Caco-2 (cell line): ENCODE measurements at regions of chr1 and their contacts with region 1.

Region 1: GRCh38 chr1:17606826-17607440 is 67.4 kb downstream of the ARHGEF10L start:
- DNase-seq: peak; percentile 66 to 76
- H3K4me3 ChIP-seq: no peak overlapping the region
- H3K4me3 Mint-ChIP-seq: no peak overlapping the region
- H3K27ac Mint-ChIP-seq: no peak overlapping the region
- H3K4me1 ChIP-seq: no peaks in the 10 kb centered on the region
- H3K4me1 Mint-ChIP-seq: no peaks in the 10 kb centered on the region
- H3K27me3 ChIP-seq: no peaks in the 10 kb centered on the region
- H3K27me3 Mint-ChIP-seq: no peaks in the 10 kb centered on the region
- CTCF ChIP-seq: peak; percentile 83 to 86

Region 2: DNA sequence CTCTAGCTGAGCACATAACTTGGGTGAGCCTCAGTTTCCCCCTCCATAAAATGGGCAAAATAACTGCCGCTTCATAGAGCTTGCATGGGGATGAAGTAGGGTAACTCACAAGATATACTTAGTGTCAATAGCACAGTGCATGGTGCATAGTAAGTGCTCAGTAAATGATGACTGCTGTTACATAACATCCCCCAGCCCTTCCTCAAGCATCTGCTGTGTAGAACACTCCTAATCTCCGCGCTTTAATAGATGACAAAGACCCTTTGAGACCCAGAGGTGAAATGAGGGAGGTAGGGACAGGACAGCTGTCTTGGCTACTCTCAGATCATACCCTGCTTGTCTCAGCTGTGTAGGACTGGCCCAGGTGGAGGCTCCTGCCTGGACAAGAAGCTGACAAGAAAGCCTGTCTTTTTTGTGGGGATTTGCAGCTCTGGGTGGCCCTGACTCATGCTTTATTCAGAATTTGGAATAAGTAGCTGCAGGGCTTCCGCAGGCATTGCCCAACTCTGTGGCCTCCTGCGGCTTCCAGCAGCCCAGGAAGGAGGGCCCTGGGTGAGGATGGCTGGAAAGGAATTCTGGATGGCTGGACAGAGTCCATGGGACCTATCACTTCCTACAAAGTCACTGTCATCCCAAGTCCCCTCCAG is 319.7 kb before region 1 on chr1:
- CTCF ChIA-PET with region 1: no interaction called
- POLR2A ChIA-PET with region 1: no interaction called
- intact Hi-C with region 1: no loop called
- DNase-seq: no peak
- H3K4me3 ChIP-seq: no peak overlapping the region
- H3K4me3 Mint-ChIP-seq: no peak overlapping the region
- H3K27ac Mint-ChIP-seq: no peak overlapping the region
- H3K4me1 ChIP-seq: no peaks in the 10 kb centered on the region
- H3K4me1 Mint-ChIP-seq: no peaks in the 10 kb centered on the region
- H3K27me3 ChIP-seq: no peaks in the 10 kb centered on the region; the same call in 1 of the 2 replicates
- H3K27me3 Mint-ChIP-seq: no peaks in the 10 kb centered on the region
- CTCF ChIP-seq: no peak

Region 3: GRCh38 chr1:17494114-17494729 is 112.7 kb before region 1 on chr1:
- CTCF ChIA-PET with region 1: interaction called, 9 read pairs
- POLR2A ChIA-PET with region 1: no interaction called
- intact Hi-C with region 1: loop called (anchors 1 kb)
- DNase-seq: peak; percentile 74 to 81
- H3K4me3 ChIP-seq: no peak overlapping the region
- H3K4me3 Mint-ChIP-seq: no peak overlapping the region
- H3K27ac Mint-ChIP-seq: no peak overlapping the region
- H3K4me1 ChIP-seq: 0 out of 2 replicates have a peak, but pooled peaks cover 7% of the 10 kb centered on the region
- H3K4me1 Mint-ChIP-seq: peaks cover 7% of the 10 kb centered on the region
- H3K27me3 ChIP-seq: no peaks in the 10 kb centered on the region
- H3K27me3 Mint-ChIP-seq: no peaks in the 10 kb centered on the region
- CTCF ChIP-seq: peak; percentile 74 to 84

Region 4: DNA sequence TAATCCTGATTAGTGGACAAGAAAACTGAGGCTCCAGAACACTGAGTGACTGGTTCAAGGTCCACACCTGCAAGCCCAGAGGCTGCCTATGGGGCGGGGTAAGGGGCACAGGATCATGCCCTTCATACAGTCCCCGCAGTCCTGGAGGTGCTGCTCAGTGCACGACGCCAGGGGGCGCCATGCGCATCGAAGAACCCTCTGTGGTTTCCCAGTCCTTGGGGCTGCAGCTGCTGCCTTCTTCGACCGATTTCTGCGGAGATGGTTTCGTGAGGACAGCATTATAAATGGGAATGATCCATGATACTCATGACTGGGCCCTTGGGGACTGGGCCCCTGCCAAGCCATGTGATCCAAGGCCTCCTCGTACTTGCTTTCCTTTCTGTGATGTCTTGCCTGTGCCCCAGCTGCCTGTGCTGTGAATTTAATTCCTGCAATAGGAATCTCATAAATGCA is 104.6 kb before region 1 on chr1:
- CTCF ChIA-PET with region 1: interaction called, 18 read pairs
- POLR2A ChIA-PET with region 1: no interaction called
- intact Hi-C with region 1: loop called (anchors 1 kb)
- DNase-seq: peak; percentile 68 to 80
- H3K4me3 ChIP-seq: no peak overlapping the region
- H3K4me3 Mint-ChIP-seq: no peak overlapping the region
- H3K27ac Mint-ChIP-seq: no peak overlapping the region
- H3K4me1 ChIP-seq: 0 out of 2 replicates have a peak, but pooled peaks cover 7% of the 10 kb centered on the region
- H3K4me1 Mint-ChIP-seq: peaks cover 7% of the 10 kb centered on the region
- H3K27me3 ChIP-seq: no peaks in the 10 kb centered on the region
- H3K27me3 Mint-ChIP-seq: no peaks in the 10 kb centered on the region
- CTCF ChIP-seq: peak; percentile 72 to 74

Region 5: GRCh38 chr1:17574516-17574915 is 32.4 kb before region 1 on chr1:
- CTCF ChIA-PET with region 1: interaction called, 76 read pairs
- POLR2A ChIA-PET with region 1: no interaction called
- intact Hi-C with region 1: loop called (anchors 1 kb)
- DNase-seq: peak; percentile 49 to 59
- H3K4me3 ChIP-seq: no peak overlapping the region
- H3K4me3 Mint-ChIP-seq: no peak overlapping the region
- H3K27ac Mint-ChIP-seq: peak overlapping the region; percentile 65
- H3K4me1 ChIP-seq: peaks cover 34% of the 10 kb centered on the region
- H3K4me1 Mint-ChIP-seq: peaks cover 21% of the 10 kb centered on the region
- H3K27me3 ChIP-seq: no peaks in the 10 kb centered on the region
- H3K27me3 Mint-ChIP-seq: no peaks in the 10 kb centered on the region
- CTCF ChIP-seq: peak; percentile 37 to 51

Region 6: GRCh38 chr1:17581389-17582123 is 25.4 kb before region 1 on chr1:
- CTCF ChIA-PET with region 1: interaction called, 76 read pairs
- POLR2A ChIA-PET with region 1: no interaction called
- intact Hi-C with region 1: no loop called
- DNase-seq: no peak
- H3K4me3 ChIP-seq: no peak overlapping the region
- H3K4me3 Mint-ChIP-seq: peak overlapping the region; percentile 36
- H3K27ac Mint-ChIP-seq: no peak overlapping the region
- H3K4me1 ChIP-seq: peaks cover 50% of the 10 kb centered on the region
- H3K4me1 Mint-ChIP-seq: peaks cover 25% of the 10 kb centered on the region
- H3K27me3 ChIP-seq: no peaks in the 10 kb centered on the region
- H3K27me3 Mint-ChIP-seq: no peaks in the 10 kb centered on the region
- CTCF ChIP-seq: no peak

Region 7: DNA sequence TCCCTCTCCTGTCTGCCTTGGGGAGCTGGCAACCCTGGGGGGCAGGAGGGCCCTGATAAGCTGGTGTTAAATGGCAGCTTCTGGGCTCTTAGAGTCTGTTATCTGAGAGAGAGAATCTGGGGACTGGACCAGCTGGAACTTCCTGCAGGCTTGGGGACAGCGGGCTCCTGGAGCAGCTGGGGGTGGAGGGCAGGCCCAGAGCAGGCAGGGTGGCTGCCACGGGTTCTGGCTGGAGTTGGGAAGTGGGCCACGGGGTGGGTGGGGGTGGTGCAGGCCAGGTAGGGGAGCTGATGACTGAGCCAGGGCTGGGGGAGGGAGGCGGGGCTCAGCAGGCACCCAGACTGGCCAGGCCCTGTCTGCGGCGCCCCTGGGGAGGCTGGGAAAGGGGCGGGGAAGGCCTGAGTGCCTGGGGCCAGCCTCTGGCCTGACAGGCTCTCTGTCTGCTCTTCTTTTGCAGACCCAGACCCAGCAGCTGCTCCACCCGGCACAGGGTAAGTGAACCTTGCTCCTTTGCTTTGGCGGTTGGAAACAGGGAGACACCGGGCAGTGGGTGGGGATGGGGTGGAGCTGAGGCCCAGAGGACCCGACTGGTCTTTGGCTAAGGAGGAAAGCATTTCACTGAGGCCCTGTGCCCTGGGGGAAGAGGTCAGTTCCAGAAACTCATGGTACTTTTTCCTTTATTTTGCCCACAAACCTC is 18.8 kb before region 1 on chr1:
- CTCF ChIA-PET with region 1: interaction called, 10 read pairs
- POLR2A ChIA-PET with region 1: interaction called, 7 read pairs
- intact Hi-C with region 1: loop called (anchors 1 kb)
- DNase-seq: peak; percentile 92 to 94
- H3K4me3 ChIP-seq: peak overlapping the region; percentile 18; the same call in 1 of the 2 replicates
- H3K4me3 Mint-ChIP-seq: peak overlapping the region; percentile 69
- H3K27ac Mint-ChIP-seq: peak overlapping the region; percentile 86
- H3K4me1 ChIP-seq: peaks cover 55% of the 10 kb centered on the region
- H3K4me1 Mint-ChIP-seq: peaks cover 41% of the 10 kb centered on the region
- H3K27me3 ChIP-seq: no peaks in the 10 kb centered on the region
- H3K27me3 Mint-ChIP-seq: no peaks in the 10 kb centered on the region
- CTCF ChIP-seq: no peak

Region 8: GRCh38 chr1:17596651-17597509 is 10.1 kb before region 1 on chr1:
- CTCF ChIA-PET with region 1: interaction called, 16 read pairs
- POLR2A ChIA-PET with region 1: interaction called, 3 read pairs
- intact Hi-C with region 1: no loop called
- DNase-seq: peak; percentile 72 to 79
- H3K4me3 ChIP-seq: peak overlapping the region; percentile 25
- H3K4me3 Mint-ChIP-seq: peak overlapping the region; percentile 63
- H3K27ac Mint-ChIP-seq: peak overlapping the region; percentile 67
- H3K4me1 ChIP-seq: peaks cover 40% of the 10 kb centered on the region
- H3K4me1 Mint-ChIP-seq: peaks cover 19% of the 10 kb centered on the region
- H3K27me3 ChIP-seq: no peaks in the 10 kb centered on the region
- H3K27me3 Mint-ChIP-seq: no peaks in the 10 kb centered on the region
- CTCF ChIP-seq: no peak

Region 9: DNA sequence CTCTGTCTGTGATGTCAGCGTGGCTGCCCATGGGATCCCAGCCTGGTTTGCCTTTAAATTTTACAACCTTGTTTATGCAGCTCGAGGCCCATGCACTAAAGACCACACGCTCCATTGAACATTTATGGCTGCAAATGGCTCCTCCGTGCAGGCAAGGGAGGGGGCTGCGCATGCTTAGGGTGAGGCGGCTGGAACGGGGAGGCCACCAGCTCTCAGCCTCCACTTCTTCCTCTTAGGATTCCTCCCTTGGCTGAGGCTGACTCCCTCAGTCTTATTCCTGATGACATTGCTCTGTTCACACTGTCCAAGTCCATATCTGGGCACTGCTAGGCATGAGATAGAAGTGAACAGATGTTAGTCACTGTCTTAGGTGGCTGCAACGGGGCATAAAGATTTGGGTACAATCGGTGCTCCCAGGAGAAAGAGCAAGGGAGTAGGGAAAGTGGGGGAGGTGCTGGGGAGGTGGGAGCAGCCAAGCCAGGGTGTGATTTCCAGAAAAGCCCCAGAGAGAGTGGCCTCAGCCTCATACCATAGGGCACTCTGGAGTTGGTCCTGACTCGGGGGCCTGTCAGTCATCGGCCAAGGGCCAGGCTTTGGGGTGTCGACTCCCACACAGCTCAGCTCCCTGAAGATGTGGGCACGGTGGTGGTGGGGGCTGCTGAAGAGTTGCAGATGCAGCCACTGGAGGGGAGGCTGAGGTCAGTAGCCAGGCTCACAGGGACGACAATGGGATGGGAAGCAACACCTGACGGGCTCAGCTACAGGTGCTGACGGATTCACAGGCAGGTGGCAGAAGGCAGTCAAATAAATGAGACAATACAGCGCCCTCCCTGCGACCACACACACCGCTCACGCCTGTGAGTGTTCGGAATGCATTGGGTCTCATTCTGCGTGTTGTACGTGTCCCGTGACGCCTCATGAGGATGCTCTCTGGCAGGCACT is 110.9 kb after region 1 on chr1:
- CTCF ChIA-PET with region 1: no interaction called
- POLR2A ChIA-PET with region 1: no interaction called
- intact Hi-C with region 1: no loop called
- DNase-seq: no peak
- H3K4me3 ChIP-seq: no peak overlapping the region
- H3K4me3 Mint-ChIP-seq: no peak overlapping the region
- H3K27ac Mint-ChIP-seq: no peak overlapping the region
- H3K4me1 ChIP-seq: no peaks in the 10 kb centered on the region
- H3K4me1 Mint-ChIP-seq: no peaks in the 10 kb centered on the region
- H3K27me3 ChIP-seq: no peaks in the 10 kb centered on the region
- H3K27me3 Mint-ChIP-seq: peaks cover 2% of the 10 kb centered on the region
- CTCF ChIP-seq: no peak

Region 10: DNA sequence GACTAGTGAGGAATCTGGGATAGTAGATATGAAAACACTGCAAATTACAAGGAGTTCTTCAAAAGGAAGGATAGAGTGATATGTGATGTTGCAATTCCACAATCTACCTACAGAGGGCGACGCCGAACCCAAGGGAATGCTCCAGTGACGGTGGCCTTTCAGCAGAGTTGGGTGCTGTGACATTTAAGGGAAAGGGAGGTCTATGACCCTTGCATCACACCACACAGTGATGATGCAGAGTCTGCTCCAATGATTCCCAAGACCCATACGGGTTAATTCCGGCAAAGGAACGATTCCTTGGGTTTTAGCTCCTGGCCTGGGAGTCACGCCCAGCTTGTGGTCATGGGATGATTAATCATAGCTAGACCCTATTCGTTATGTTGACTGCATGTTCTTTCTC is 377.6 kb after region 1 on chr1:
- CTCF ChIA-PET with region 1: no interaction called
- POLR2A ChIA-PET with region 1: no interaction called
- intact Hi-C with region 1: no loop called
- DNase-seq: peak in 1 of 2 experiments; percentile 11
- H3K4me3 ChIP-seq: no peak overlapping the region
- H3K4me3 Mint-ChIP-seq: no peak overlapping the region
- H3K27ac Mint-ChIP-seq: no peak overlapping the region
- H3K4me1 ChIP-seq: no peaks in the 10 kb centered on the region
- H3K4me1 Mint-ChIP-seq: peaks cover 7% of the 10 kb centered on the region
- H3K27me3 ChIP-seq: no peaks in the 10 kb centered on the region; the same call in 1 of the 2 replicates
- H3K27me3 Mint-ChIP-seq: peaks cover 2% of the 10 kb centered on the region
- CTCF ChIP-seq: peak; percentile 26 to 57